ENCODE measurements at regions of chr10 and their contacts with region 1.

Region 1: DNA sequence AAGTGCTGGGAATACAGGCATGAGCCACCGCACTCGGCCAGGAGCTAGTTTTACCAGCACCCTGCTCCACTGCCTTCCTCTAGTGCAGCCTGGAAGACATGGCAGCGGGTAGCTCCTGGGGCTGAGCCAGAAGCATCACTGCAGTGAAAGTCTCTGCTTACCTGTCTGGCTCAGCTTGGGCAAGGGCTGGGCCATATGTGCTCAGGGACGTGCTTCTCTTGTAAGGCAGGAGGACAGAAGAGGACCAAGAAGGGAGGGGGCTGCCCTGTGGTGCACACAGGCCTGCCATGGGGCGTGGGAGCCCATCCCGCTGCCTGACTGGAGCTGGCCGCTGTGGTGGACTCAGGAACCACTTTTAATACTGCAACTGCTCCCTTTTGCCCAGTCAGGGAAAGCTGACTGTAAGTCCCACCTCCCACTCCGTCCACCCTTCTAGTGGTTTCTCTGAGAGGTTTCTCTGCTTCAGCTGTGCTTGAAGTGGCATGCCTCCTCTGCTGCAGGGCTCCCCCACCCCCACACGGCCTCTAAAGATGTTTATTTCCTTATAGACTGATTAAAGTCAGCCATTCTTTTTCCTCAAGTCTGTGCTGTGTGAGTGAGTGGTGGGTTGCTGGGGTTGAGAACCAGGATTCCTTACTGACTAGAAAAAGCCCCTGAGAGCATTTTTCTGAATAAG is 25.3 kb upstream of the C10orf95 start:
- DNase-seq: no peak
- ATAC-seq: no peak
- H3K4me3 ChIP-seq: no peak overlapping the region
- H3K27ac ChIP-seq: no peak overlapping the region
- H3K4me1 ChIP-seq: no peaks in the 10 kb centered on the region
- H3K27me3 ChIP-seq: no peaks in the 10 kb centered on the region
- CTCF ChIP-seq: no peak
- POLR2A ChIP-seq: no peak
- RAD21 ChIP-seq: no peak

Region 2: DNA sequence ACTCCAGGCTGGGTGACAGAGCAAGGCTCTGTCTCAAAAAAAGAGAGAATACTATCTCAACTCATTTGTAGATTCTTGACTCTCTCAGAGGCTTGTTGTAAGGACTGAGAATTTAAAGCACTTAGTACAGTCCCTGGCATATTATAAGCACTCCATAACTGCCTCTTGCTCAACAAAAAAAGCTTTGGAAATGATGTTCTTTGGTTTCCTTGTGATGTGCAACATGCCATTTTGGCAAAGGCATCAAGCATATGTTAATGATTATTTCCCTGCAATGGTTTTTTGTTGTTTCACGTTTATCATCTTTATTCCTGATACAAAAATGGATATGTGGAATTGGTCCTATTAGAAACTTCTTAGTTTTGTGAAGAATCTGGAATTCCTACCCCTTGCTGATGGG is 308.7 kb before region 1 on chr10:
- CTCF ChIA-PET with region 1: interaction called, 9 read pairs
- POLR2A ChIA-PET with region 1: no interaction called
- RAD21 ChIA-PET with region 1: interaction called in 1 of 2 experiments, 4 read pairs
- intact Hi-C with region 1: loop called (anchors 1 kb)
- DNase-seq: no peak
- ATAC-seq: no peak
- H3K4me3 ChIP-seq: no peak overlapping the region
- H3K27ac ChIP-seq: no peak overlapping the region
- H3K4me1 ChIP-seq: peaks cover 4 to 6% of the 10 kb centered on the region in 2 experiments; a peak in 2 of 4 replicates
- H3K27me3 ChIP-seq: no peaks in the 10 kb centered on the region
- CTCF ChIP-seq: no peak
- POLR2A ChIP-seq: no peak
- RAD21 ChIP-seq: no peak

Region 3: DNA sequence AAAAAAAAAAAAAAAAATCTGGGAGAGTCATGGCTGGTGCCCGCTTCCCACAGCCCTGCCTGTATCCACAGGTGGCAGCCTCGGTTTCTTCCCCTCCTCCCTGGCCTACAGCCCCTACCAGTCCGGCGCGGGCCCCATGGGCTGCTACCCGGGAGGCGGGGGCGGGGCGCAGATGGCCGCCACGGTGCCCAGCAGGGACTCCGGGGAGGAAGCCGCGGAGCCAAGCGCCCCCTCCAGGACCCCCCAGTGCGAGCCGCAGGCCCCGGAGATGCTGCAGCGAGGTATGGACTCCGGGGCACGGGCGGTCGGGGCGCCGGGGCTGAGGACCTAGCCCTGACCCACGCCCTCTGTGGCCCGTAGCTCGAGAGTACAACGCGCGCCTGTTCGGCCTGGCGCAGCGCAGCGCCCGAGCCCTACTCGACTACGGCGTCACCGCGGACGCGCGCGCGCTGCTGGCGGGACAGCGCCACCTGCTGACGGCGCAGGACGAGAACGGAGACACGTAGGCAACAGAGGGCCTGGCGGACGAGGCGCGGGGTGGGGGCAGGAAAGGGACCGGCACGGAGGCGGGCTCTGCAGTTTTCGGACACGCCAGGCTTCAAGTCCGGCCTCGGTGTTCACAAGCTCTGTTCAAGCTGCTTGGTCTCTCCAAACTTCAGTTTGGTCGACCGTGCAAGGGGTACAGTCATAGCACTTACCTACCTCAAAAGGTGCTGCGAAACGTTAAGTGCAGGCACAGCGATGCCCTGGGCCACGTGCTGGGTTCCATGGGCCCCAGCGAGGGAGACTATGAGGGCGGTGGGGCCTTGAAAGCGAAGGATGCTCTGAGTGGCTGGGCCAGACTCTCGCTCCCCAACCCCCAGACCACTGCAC is 77.2 kb before region 1 on chr10:
- CTCF ChIA-PET with region 1: interaction called, 19 read pairs
- POLR2A ChIA-PET with region 1: interaction called, 3 read pairs
- RAD21 ChIA-PET with region 1: no interaction called
- intact Hi-C with region 1: loop called (anchors 1 kb)
- DNase-seq: peak; percentile 80
- ATAC-seq: peak; percentile 75
- H3K4me3 ChIP-seq: peak overlapping the region; percentile 45 to 63
- H3K27ac ChIP-seq: peak overlapping the region; percentile 52
- H3K4me1 ChIP-seq: peaks cover 21 to 73% of the 10 kb centered on the region in 2 experiments
- H3K27me3 ChIP-seq: no peaks in the 10 kb centered on the region
- CTCF ChIP-seq: peak in 2 of 3 experiments; percentile 97 to 99; a peak in 4 of 6 replicates
- POLR2A ChIP-seq: peak; percentile 67
- RAD21 ChIP-seq: no peak

Region 4: DNA sequence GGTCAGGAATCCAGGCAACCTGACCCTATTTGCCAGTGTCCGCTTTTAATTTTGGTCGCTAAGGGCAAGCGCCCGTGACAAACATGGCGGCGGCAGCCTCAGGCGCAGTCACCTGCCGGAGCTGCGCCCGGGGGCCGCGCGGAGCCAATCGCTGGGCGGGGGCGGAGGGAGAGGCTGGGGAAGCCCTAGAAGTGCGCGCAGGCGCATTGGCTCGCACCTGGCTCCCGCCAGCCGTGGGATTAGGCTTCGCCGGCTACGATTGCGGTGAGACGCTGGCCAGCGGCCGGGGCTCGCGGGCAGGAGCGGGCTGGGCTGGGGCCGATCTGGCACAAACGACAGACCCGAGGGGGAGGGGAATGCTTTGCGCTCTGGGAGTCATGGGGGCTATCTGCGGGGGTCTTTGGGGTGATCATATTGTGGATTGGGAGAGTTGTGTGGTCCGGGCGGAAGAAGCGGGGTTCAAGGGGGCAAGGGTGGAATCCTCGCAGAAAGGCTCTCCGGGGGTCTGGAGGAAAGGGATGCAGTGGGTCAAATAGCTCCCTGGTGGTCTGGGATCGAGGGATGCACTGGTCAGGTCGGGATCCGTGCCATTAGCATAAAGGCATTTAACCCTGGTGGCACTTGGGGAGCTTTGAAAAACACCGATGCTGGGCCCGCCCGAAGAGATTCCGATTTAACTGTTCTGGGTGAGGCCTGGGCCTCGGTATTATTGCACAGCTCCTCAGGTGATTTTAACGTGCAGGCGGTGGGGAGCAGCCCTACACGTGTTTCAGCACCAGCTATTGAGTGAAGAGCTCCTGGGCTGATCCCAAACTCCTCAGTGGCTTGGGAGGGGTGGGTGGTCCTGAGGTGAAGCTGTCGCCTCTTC is 15.2 kb before region 1 on chr10:
- CTCF ChIA-PET with region 1: interaction called, 18 read pairs
- POLR2A ChIA-PET with region 1: no interaction called
- RAD21 ChIA-PET with region 1: no interaction called
- intact Hi-C with region 1: no loop called
- DNase-seq: peak; percentile 87
- ATAC-seq: peak; percentile 85
- H3K4me3 ChIP-seq: peak overlapping the region; percentile 72 to 73
- H3K27ac ChIP-seq: peak overlapping the region; percentile 60
- H3K4me1 ChIP-seq: peaks cover 31 to 38% of the 10 kb centered on the region in 2 experiments
- H3K27me3 ChIP-seq: no peaks in the 10 kb centered on the region
- CTCF ChIP-seq: no peak
- POLR2A ChIP-seq: peak; percentile 80
- RAD21 ChIP-seq: no peak

Region 5: DNA sequence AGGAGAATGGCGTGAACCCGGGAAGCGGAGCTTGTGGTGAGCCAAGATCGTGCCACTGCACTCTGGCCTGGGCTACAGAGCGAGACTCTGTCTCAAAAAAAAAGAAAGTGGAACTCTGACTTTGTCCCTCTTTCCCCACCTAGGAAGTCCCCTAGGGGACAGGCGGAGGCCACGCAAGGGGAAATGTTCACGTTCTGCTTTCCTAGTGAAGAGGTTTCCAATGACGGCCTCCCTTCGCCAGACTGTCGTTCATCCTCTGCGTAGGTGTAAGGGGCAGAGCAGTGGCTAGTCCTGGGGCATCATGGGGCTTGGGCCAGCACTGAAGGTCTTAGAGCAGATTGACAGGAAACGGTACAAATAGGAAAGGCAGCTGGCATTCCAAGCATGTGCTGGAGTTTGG is 57.7 kb after region 1 on chr10:
- CTCF ChIA-PET with region 1: no interaction called
- POLR2A ChIA-PET with region 1: no interaction called
- RAD21 ChIA-PET with region 1: no interaction called
- intact Hi-C with region 1: no loop called
- DNase-seq: no peak
- ATAC-seq: no peak
- H3K4me3 ChIP-seq: no peak overlapping the region
- H3K27ac ChIP-seq: no peak overlapping the region
- H3K4me1 ChIP-seq: no peaks in the 10 kb centered on the region
- H3K27me3 ChIP-seq: no peaks in the 10 kb centered on the region
- CTCF ChIP-seq: no peak
- POLR2A ChIP-seq: no peak
- RAD21 ChIP-seq: no peak

Measured in HCT116 (cell line).